ENCODE measurements at regions of chr11 and their contacts with region 1.

Region 1: DNA sequence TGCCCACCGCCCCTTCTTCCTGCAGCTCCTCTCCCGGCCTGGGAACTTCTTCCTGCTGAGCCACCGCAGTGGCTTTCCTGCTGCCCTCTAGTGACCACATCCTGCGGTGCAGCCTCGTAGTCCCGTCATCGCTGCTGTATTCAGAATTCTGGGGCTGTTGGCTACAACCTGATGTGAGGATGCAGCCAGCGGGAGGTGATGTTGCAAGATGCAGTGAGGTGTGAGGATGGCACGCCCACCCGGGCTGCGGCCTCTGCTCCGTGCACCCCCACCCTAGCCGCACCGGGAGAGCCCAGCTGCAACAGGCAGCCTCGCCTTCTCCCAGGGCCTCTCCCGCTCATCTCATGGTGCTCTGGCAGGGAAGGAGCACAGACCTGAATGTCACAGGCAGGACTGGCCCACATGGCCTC is 10.1 kb downstream of the CHST1 start:
- DNase-seq: peak; percentile 75 to 79 (median 76)
- ATAC-seq: peak; percentile 74
- H3K4me3 ChIP-seq: no peak overlapping the region
- H3K27ac ChIP-seq: no peak overlapping the region
- H3K4me1 ChIP-seq: no peaks in the 10 kb centered on the region
- H3K27me3 ChIP-seq: no peaks in the 10 kb centered on the region
- CTCF ChIP-seq: peak; percentile 79 to 95 (median 84)
- POLR2A ChIP-seq: no peak

Region 2: GRCh38 chr11:45365961-45366618 is 289.3 kb before region 1 on chr11:
- intact Hi-C with region 1: loop called (anchors 10 kb)
- DNase-seq: no peak
- ATAC-seq: peak; percentile 42
- H3K4me3 ChIP-seq: no peak overlapping the region
- H3K27ac ChIP-seq: no peak overlapping the region
- H3K4me1 ChIP-seq: peaks cover 6% of the 10 kb centered on the region
- H3K27me3 ChIP-seq: no peaks in the 10 kb centered on the region
- CTCF ChIP-seq: no peak
- POLR2A ChIP-seq: no peak

Region 3: GRCh38 chr11:45885274-45885920 is 230.0 kb after region 1 on chr11 and contains the start of gene MAPK8IP1:
- intact Hi-C with region 1: no loop called
- DNase-seq: peak; percentile 62 to 73 (median 66)
- ATAC-seq: peak; percentile 90
- H3K4me3 ChIP-seq: peak within 1 kb of the TSS in 1 of 2 donors; percentile 49
- H3K27ac ChIP-seq: peak within 1 kb of the TSS in 1 of 4 donors; percentile 24
- H3K4me1 ChIP-seq: peaks cover 11% of the 10 kb centered on the region
- H3K27me3 ChIP-seq: no peaks in the 10 kb centered on the region
- CTCF ChIP-seq: peak in 3 of 7 experiments; percentile 10 to 25 (median 12)
- POLR2A ChIP-seq: no peak
- total RNA-seq, gene MAPK8IP1: 23.7 to 32.4 TPM